ENCODE measurements at regions of chr1 and their contacts with region 1.

Region 1: GRCh38 chr1:61851849-61852669 is 109.8 kb downstream of the PATJ start:
- DNase-seq: peak; percentile 59
- ATAC-seq: no peak
- H3K4me3 ChIP-seq: no peak overlapping the region
- H3K4me3 Mint-ChIP-seq: no peak overlapping the region
- H3K27ac ChIP-seq: no peak overlapping the region
- H3K27ac Mint-ChIP-seq: no peak overlapping the region
- H3K4me1 ChIP-seq: no peaks in the 10 kb centered on the region
- H3K4me1 Mint-ChIP-seq: no peaks in the 10 kb centered on the region
- H3K27me3 ChIP-seq: no peaks in the 10 kb centered on the region
- H3K27me3 Mint-ChIP-seq: no peaks in the 10 kb centered on the region
- CTCF ChIP-seq: peak; percentile 86

Region 2: GRCh38 chr1:60969971-60970509 is 882.0 kb before region 1 on chr1:
- CTCF ChIA-PET with region 1: no interaction called
- POLR2A ChIA-PET with region 1: no interaction called
- intact Hi-C with region 1: loop called (anchors 5 kb)
- DNase-seq: no peak
- ATAC-seq: no peak
- H3K4me3 ChIP-seq: no peak overlapping the region
- H3K4me3 Mint-ChIP-seq: no peak overlapping the region
- H3K27ac ChIP-seq: no peak overlapping the region
- H3K27ac Mint-ChIP-seq: no peak overlapping the region
- H3K4me1 ChIP-seq: no peaks in the 10 kb centered on the region
- H3K4me1 Mint-ChIP-seq: no peaks in the 10 kb centered on the region
- H3K27me3 ChIP-seq: no peaks in the 10 kb centered on the region
- H3K27me3 Mint-ChIP-seq: no peaks in the 10 kb centered on the region
- CTCF ChIP-seq: no peak

Region 3: GRCh38 chr1:62131093-62131725 is 279.1 kb after region 1 on chr1:
- CTCF ChIA-PET with region 1: no interaction called
- POLR2A ChIA-PET with region 1: no interaction called
- intact Hi-C with region 1: no loop called
- DNase-seq: peak; percentile 15
- ATAC-seq: peak; percentile 51
- H3K4me3 ChIP-seq: no peak overlapping the region
- H3K4me3 Mint-ChIP-seq: no peak overlapping the region
- H3K27ac ChIP-seq: no peak overlapping the region
- H3K27ac Mint-ChIP-seq: no peak overlapping the region
- H3K4me1 ChIP-seq: no peaks in the 10 kb centered on the region
- H3K4me1 Mint-ChIP-seq: no peaks in the 10 kb centered on the region
- H3K27me3 ChIP-seq: no peaks in the 10 kb centered on the region
- H3K27me3 Mint-ChIP-seq: no peaks in the 10 kb centered on the region
- CTCF ChIP-seq: peak; percentile 63